Aorta (tissue), 5 donors: ENCODE measurements at regions of chr9 and their contacts with region 1.

Region 1: DNA sequence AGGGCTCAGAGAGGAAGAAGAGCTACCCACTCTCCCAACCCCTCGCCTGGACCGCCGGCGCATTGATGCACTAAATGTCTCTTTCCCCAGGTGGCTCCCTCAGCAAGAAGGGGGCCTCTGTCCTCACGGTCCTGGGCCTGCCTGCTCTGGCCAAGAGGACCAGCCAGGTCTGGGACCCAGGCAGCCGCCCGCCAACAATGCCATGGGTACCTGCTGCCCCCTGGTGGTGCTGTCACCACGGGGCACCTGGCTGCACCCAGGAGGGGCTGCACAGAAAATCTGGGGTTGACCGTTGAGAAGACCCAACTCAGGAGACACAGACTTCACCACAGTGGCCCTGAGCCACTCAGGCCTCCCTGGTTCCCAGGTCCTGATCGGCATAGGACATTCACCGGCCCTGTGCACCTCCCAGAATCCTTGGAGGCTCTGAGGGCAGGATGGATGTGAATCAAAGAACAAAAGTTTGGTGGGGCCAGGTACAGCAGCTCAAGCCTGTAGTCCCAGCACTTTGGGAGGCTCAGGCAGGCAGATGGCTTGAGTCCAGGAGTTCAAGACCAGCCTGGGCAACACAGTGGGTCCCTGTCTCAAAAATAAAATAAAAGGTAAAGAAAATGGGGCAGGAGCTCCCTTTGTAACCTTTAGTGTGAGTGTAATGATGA is 2.4 kb upstream of the VAV2 start:
- DNase-seq: peak; percentile 84 to 94
- ATAC-seq: peak; percentile 83
- H3K4me3 ChIP-seq: no peak overlapping the region
- H3K27ac ChIP-seq: no peak overlapping the region
- H3K4me1 ChIP-seq: no peaks in the 10 kb centered on the region
- H3K27me3 ChIP-seq: no peaks in the 10 kb centered on the region

Region 2: DNA sequence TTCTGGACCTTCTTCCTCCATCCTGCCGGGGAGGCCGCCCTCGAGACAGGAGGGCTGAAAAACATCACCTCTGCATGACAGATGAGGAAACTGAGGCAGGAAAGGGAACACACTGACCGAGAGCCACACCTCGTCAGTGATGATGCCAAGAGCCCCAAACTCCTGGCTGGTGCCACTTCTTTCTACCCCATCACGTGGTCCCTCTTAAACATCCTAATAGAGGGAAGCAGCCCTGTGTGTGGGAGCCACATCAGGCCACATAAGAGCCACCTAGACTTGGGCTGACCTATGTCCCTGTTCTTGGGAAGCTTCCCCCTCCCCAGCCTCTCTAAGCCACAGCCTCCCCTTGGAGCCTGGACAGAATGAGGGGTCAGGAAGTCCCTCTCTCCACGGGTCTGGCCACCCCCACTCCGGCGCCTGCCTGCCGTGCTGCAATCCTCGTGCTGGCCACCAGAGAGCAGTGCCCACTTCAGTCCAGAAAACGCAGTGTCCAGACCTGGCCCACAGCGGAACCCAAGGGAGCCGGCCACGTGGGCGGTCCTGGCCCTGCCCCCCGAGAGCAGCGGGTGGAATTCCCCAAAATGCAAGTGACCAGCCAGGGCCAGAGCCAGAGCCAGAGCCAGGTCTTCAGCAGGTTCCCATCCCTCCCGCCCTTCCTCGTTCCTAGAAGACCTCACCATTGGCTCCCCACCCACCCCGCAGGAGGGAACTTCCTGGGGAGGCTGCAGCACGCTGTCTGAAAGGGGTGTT is 201.6 kb before region 1 on chr9:
- intact Hi-C with region 1: loop called (anchors 1 kb)
- DNase-seq: peak; percentile 89 to 92
- ATAC-seq: peak; percentile 87
- H3K4me3 ChIP-seq: no peak overlapping the region
- H3K27ac ChIP-seq: no peak overlapping the region
- H3K4me1 ChIP-seq: no peaks in the 10 kb centered on the region
- H3K27me3 ChIP-seq: no peaks in the 10 kb centered on the region